OCI-LY7 (cell line): ENCODE measurements at regions of chr2 and their contacts with region 1.

Region 1: DNA sequence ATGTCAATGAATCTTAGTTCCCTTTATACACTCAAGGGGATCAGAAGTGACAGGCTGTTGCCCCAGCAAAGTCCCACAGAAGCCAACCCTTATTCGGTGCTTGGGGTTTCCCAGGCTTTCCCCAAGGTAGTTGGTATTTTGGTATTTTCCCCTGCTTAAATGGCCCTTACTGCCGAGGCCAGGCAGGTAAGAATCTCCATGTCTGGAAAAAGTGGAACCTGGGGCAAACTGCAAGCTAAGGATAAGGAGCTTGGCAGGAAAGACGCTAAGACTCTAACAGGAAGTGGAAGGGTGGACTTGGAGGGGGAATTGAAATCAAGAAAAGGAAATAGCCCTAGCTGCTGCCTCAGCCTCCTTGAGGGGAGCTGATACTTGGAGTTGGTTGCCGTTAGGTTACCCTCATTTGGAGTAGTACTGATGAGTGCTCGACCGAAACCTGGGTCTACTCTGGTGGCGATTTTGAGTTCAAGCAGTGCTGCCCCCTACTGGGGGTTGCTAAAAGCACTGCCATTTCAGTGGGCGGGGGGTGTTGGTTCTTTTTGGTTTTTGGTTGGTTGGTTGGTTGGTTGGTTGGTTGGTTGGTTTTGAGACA is 3.3 kb upstream of the GPBAR1 start:
- DNase-seq: peak; percentile 84
- H3K4me3 ChIP-seq: no peak overlapping the region
- H3K27ac ChIP-seq: peak overlapping the region; percentile 71
- H3K4me1 ChIP-seq: peaks cover 46% of the 10 kb centered on the region
- CTCF ChIP-seq: peak; percentile 81

Region 2: GRCh38 chr2:218168635-218169462 is 88.6 kb before region 1 on chr2:
- CTCF ChIA-PET with region 1: no interaction called
- POLR2A ChIA-PET with region 1: no interaction called
- intact Hi-C with region 1: loop called (anchors 2 kb)
- DNase-seq: peak; percentile 76
- H3K4me3 ChIP-seq: no peak overlapping the region
- H3K27ac ChIP-seq: no peak overlapping the region
- H3K4me1 ChIP-seq: no peaks in the 10 kb centered on the region
- CTCF ChIP-seq: peak; percentile 96

Region 3: DNA sequence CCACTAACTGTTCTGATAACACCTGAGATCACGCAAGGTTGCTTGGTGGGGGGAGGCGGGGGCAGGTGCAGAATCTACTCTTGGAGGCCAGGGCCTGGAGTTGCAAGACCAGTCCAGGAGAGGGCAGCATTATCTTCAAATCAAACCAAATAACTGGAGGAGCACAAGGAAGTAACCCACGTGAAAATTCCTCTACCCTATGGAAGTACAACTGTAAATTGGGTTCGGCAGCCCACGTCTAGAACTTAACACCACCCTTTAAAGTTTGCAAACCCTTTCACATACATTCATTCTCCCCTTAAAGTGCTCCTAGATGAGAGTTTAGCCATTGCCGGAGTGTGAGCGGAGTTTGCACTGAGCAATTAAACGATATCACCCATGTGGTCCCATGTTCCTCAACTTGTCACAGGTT is 71.1 kb before region 1 on chr2:
- CTCF ChIA-PET with region 1: no interaction called
- POLR2A ChIA-PET with region 1: interaction called, 3 read pairs
- intact Hi-C with region 1: loop called (anchors 1 kb)
- DNase-seq: peak; percentile 79
- H3K4me3 ChIP-seq: no peak overlapping the region
- H3K27ac ChIP-seq: no peak overlapping the region
- H3K4me1 ChIP-seq: peaks cover 6% of the 10 kb centered on the region
- CTCF ChIP-seq: peak; percentile 93

Region 4: GRCh38 chr2:218276986-218277755 is 19.7 kb after region 1 on chr2:
- CTCF ChIA-PET with region 1: no interaction called
- POLR2A ChIA-PET with region 1: no interaction called
- intact Hi-C with region 1: no loop called
- DNase-seq: no peak
- H3K4me3 ChIP-seq: no peak overlapping the region
- H3K27ac ChIP-seq: no peak overlapping the region
- H3K4me1 ChIP-seq: peaks cover 11% of the 10 kb centered on the region
- CTCF ChIP-seq: 0 out of 2 replicates have a peak, but pooled peaks have one; percentile 26